ENCODE measurements at regions of chr1 and their contacts with region 1.

Region 1: DNA sequence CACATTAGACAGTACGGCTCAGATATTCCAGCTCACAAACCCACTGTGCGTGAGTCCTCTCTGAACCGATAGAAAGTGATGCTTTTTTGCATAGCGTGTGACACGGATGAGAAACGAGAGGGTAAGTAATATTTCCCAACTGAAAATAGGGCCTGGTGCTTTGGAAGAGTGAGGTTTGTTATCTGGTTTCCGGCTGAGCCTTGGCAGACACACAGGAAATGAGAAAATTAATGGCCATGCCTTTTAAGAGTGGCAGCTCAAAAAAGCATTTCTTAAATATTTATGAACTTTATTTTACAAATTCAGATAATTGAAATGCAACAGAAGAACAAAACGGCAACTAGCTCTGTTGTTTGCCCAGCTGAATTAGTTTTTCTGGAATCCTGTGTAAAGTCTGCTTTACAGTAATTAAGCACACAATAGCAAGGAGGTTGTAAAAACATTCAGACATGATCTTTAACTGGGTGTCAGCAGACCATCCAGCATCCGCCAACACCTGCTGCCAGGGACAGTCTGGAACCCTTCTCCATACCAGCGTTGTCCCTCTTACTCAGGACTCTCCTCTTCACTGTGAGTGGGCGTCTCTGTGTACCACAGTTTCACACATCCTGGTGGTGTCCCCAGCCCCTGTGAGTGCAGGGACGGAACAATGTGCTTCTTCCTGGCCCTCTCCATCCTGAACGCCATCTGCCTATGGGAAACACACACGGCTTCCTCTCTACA is 155.4 kb downstream of the PGBD5 start:
- DNase-seq: peak; percentile 19
- H3K4me3 Mint-ChIP-seq: no peak overlapping the region
- H3K27ac Mint-ChIP-seq: peak overlapping the region; percentile 91
- H3K4me1 Mint-ChIP-seq: peaks cover 31% of the 10 kb centered on the region
- H3K27me3 Mint-ChIP-seq: no peaks in the 10 kb centered on the region

Region 2: GRCh38 chr1:230120926-230121381 is 149.8 kb before region 1 on chr1:
- intact Hi-C with region 1: loop called (anchors 10 kb)
- DNase-seq: no peak
- H3K4me3 Mint-ChIP-seq: no peak overlapping the region
- H3K27ac Mint-ChIP-seq: no peak overlapping the region
- H3K4me1 Mint-ChIP-seq: peaks cover 63% of the 10 kb centered on the region
- H3K27me3 Mint-ChIP-seq: no peaks in the 10 kb centered on the region

Region 3: GRCh38 chr1:230186003-230186863 is 84.5 kb before region 1 on chr1:
- intact Hi-C with region 1: loop called (anchors 5 kb)
- DNase-seq: no peak
- H3K4me3 Mint-ChIP-seq: no peak overlapping the region
- H3K27ac Mint-ChIP-seq: peak overlapping the region; percentile 34
- H3K4me1 Mint-ChIP-seq: peaks cover 47% of the 10 kb centered on the region
- H3K27me3 Mint-ChIP-seq: no peaks in the 10 kb centered on the region

Region 4: GRCh38 chr1:230240446-230241086 is 30.2 kb before region 1 on chr1:
- intact Hi-C with region 1: loop called (anchors 1 kb)
- DNase-seq: no peak
- H3K4me3 Mint-ChIP-seq: no peak overlapping the region
- H3K27ac Mint-ChIP-seq: peak overlapping the region; percentile 85
- H3K4me1 Mint-ChIP-seq: peaks cover 35% of the 10 kb centered on the region
- H3K27me3 Mint-ChIP-seq: no peaks in the 10 kb centered on the region

Region 5: GRCh38 chr1:230303822-230304221 is 33.1 kb after region 1 on chr1:
- intact Hi-C with region 1: loop called (anchors 2 kb)
- DNase-seq: no peak
- H3K4me3 Mint-ChIP-seq: no peak overlapping the region
- H3K27ac Mint-ChIP-seq: peak overlapping the region; percentile 4
- H3K4me1 Mint-ChIP-seq: peaks cover 24% of the 10 kb centered on the region
- H3K27me3 Mint-ChIP-seq: no peaks in the 10 kb centered on the region

Region 6: DNA sequence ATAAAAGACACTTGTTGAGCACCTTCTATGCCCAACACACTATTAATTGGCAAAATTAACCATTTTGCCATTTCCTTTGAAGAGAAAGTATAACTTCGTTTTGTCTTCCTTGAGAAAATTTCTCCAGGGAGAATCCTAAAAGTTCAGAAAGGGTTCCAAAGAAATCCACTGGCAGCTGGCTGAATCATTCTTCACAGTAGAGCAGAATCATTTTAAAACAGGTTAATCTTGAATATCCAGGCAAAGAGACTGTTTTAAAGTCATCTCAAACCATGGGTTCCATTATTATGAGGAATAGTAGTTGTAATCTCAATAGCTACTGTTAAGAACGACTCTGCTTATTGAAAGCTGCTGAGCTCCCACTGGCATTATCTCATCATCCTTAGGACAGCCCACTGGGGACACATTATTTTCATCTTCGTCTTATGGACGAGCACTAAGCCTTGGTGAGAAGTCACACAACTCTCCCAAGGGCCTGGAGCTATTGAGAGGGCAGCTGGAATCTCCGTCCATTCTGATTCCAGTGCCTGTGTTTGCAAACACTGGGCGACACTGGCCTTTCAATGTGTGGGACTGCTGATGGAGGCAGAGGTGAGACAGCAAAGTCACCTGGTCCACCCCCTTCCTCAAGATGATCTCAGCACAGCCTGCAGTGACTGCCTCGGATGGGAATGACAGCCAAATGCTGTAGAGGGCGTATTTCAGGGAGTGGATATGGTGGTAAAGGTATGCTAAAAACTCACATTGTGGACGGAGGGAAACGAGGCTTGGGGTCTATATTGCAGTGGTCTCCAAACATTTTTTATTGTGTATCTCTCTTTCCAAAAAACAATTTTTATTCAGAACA is 170.7 kb after region 1 on chr1:
- intact Hi-C with region 1: no loop called
- DNase-seq: no peak
- H3K4me3 Mint-ChIP-seq: no peak overlapping the region
- H3K27ac Mint-ChIP-seq: no peak overlapping the region
- H3K4me1 Mint-ChIP-seq: no peaks in the 10 kb centered on the region
- H3K27me3 Mint-ChIP-seq: no peaks in the 10 kb centered on the region